BJ (cell line): ENCODE measurements at regions of chr6 and their contacts with region 1.

Region 1: DNA sequence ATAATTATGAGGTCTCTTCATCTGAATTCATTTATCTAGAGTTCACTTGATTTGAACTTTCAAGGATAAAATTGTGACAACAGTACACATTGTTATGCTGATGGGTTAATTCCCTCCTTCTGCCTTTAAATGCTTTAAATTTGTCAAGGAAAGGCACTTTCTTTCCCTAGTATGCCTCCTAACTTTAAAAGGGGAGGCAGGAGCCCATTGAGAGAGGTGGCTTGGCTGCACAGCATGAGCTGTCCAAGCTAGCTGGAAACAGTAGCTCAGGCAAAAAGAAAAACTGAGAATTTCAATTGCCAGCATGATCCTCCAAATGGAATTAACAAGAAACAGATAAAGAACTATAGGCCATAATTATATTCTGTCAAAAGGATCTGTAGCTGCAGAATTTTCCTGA is 243.3 kb upstream of the GRIK2 start:
- DNase-seq: no peak
- H3K4me3 ChIP-seq: no peak overlapping the region
- H3K27me3 ChIP-seq: no peaks in the 10 kb centered on the region; the same call in 1 of the 2 replicates
- CTCF ChIP-seq: no peak

Region 2: DNA sequence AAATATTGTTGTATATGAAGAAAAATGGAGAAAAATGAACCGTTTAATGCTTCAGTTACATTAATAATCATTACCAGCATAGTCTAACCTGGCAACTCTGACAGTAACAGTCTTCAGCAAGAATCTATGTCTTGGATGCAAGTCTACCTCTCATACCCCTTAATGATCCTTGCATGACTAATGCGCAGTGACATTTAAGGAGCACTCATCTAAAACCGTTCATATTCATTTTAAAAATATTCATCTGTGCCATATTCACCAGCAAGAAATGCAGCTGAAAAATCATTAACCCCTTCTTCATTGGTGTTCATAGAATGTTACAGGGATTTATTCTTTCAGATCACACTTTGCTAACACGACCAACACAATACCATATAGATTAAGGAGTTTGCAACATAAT is 41.9 kb before region 1 on chr6:
- CTCF ChIA-PET with region 1: no interaction called
- POLR2A ChIA-PET with region 1: no interaction called
- DNase-seq: no peak
- H3K4me3 ChIP-seq: no peak overlapping the region
- H3K27me3 ChIP-seq: no peaks in the 10 kb centered on the region
- CTCF ChIP-seq: no peak

Region 3: GRCh38 chr6:101126501-101126900 is 23.7 kb before region 1 on chr6:
- CTCF ChIA-PET with region 1: no interaction called
- POLR2A ChIA-PET with region 1: no interaction called
- DNase-seq: no peak
- H3K4me3 ChIP-seq: no peak overlapping the region
- H3K27me3 ChIP-seq: no peaks in the 10 kb centered on the region
- CTCF ChIP-seq: no peak

Region 4: DNA sequence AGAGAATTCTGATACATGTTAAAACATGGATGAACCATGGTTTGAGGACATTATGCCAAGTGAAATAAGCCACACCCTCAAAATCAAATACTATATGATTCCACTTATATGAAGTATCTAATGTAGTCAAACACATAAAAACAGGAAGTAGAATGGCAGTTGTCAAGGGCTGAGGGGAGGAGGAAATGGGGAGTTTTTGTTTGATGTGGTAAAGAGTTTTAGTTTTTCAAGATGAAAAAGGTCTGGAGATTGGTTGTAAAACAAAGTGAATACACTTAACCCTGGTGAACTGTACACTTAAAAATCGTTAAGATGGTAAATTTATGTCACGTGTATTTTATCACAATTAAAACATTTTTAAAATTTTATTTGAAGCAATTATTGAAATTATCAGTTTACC is 115.8 kb after region 1 on chr6:
- CTCF ChIA-PET with region 1: no interaction called
- POLR2A ChIA-PET with region 1: interaction called, 14 read pairs
- DNase-seq: no peak
- H3K4me3 ChIP-seq: no peak overlapping the region
- H3K27me3 ChIP-seq: no peaks in the 10 kb centered on the region
- CTCF ChIP-seq: no peak

Region 5: DNA sequence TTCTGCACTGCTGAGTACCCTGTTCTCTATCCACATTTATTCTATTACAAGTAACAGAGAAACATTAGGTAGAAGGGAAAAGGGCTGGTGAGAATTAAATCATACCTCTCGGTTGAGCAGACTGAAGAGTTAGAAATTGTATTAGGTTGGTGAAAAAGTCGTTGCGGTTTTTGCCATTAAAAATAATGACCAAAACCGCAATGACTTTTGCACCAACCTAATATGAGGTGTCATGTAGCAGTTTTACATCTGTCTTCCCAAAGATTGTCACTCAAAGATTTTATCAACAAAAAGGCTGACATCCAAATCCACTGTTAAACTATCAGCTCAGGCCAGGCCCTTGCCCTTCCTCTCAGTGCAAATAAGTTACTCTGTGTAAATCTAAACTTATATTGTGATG is 215.0 kb after region 1 on chr6:
- CTCF ChIA-PET with region 1: no interaction called
- POLR2A ChIA-PET with region 1: no interaction called
- DNase-seq: no peak
- H3K4me3 ChIP-seq: no peak overlapping the region
- H3K27me3 ChIP-seq: no peaks in the 10 kb centered on the region
- CTCF ChIP-seq: no peak